MCF 10A (cell line): ENCODE measurements at regions of chr13 and their contacts with region 1.

Region 1: GRCh38 chr13:76980075-76980718 is 11.7 kb upstream of the CLN5 start:
- DNase-seq: peak; percentile 70
- H3K4me3 Mint-ChIP-seq: peak overlapping the region; percentile 52
- H3K27ac Mint-ChIP-seq: no peak overlapping the region
- H3K4me1 Mint-ChIP-seq: peaks cover 19% of the 10 kb centered on the region
- H3K27me3 Mint-ChIP-seq: peaks cover 20% of the 10 kb centered on the region
- CTCF ChIP-seq: peak; percentile 94

Region 2: DNA sequence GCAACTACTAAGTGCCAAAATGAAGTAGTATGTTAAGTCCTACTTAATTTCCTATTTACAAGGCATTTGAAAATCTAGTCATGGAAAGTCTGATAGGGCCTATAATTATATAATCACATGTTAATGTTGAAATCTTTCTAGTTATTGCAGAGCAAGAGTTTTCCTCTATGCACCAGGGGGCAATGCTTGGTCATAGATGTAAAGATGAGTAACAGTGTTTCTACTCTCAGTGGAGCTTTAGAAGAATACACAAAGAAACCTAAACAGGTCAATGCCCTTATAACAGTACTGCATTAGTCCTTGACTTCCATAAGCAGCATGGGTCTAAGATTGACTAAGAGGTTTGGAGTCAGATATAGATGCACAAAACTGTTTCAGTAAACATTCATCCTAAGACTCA is 312.6 kb before region 1 on chr13:
- CTCF ChIA-PET with region 1: interaction called, 22 read pairs
- POLR2A ChIA-PET with region 1: no interaction called
- intact Hi-C with region 1: no loop called
- DNase-seq: peak; percentile 59
- H3K4me3 Mint-ChIP-seq: no peak overlapping the region
- H3K27ac Mint-ChIP-seq: no peak overlapping the region
- H3K4me1 Mint-ChIP-seq: peaks cover 20% of the 10 kb centered on the region
- H3K27me3 Mint-ChIP-seq: no peaks in the 10 kb centered on the region
- CTCF ChIP-seq: peak; percentile 26

Region 3: DNA sequence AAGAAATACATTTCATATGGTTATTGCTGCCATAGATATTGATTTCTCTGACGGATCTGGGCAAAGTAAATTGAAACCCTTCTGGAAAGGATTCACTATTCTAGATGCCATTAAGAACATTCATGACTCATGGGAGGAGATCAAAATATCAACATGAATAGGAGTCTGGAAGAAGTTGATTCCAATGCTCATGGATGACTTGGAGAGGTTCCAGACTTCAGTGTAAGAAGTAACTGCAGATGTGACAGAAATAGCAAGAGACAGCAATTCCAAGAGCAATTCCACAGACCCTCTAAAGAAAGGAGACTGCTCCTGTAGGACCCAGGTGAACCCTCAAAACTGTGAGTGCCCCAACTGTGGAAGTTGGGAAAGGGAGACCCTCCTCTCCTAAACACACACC is 63.1 kb before region 1 on chr13:
- CTCF ChIA-PET with region 1: interaction called, 16 read pairs
- POLR2A ChIA-PET with region 1: interaction called, 13 read pairs
- intact Hi-C with region 1: no loop called
- DNase-seq: peak; percentile 46
- H3K4me3 Mint-ChIP-seq: no peak overlapping the region
- H3K27ac Mint-ChIP-seq: peak overlapping the region; percentile 91
- H3K4me1 Mint-ChIP-seq: peaks cover 19% of the 10 kb centered on the region
- H3K27me3 Mint-ChIP-seq: no peaks in the 10 kb centered on the region
- CTCF ChIP-seq: no peak

Region 4: DNA sequence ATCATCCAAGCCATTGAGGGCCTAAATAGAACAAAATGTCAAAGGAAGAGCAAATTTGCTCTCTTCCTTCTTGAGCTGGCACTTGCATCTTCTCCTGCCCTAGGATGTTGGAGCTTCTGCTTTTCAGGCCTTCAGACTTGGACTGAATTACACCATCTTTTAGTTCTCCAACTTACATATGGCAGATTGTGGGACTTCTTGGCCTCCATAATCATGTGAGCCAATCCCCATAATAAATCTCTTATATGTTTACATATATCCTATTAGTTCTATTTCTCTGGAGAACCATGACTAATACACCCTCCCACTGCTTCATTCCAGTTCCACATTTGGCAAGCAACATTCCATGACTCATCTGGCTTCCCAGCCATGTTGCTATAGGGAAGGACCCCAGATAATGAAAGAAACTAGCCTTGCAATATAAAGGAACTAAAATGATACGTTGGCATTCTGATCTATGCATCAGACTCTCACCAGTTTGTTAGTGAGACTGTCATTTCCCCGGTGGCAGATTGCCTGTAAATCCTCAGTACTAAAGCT is 42.8 kb before region 1 on chr13:
- CTCF ChIA-PET with region 1: interaction called, 16 read pairs
- POLR2A ChIA-PET with region 1: interaction called, 11 read pairs
- intact Hi-C with region 1: loop called (anchors 5 kb)
- DNase-seq: peak; percentile 98
- H3K4me3 Mint-ChIP-seq: no peak overlapping the region
- H3K27ac Mint-ChIP-seq: peak overlapping the region; percentile 78
- H3K4me1 Mint-ChIP-seq: peaks cover 38% of the 10 kb centered on the region
- H3K27me3 Mint-ChIP-seq: no peaks in the 10 kb centered on the region
- CTCF ChIP-seq: no peak

Region 5: DNA sequence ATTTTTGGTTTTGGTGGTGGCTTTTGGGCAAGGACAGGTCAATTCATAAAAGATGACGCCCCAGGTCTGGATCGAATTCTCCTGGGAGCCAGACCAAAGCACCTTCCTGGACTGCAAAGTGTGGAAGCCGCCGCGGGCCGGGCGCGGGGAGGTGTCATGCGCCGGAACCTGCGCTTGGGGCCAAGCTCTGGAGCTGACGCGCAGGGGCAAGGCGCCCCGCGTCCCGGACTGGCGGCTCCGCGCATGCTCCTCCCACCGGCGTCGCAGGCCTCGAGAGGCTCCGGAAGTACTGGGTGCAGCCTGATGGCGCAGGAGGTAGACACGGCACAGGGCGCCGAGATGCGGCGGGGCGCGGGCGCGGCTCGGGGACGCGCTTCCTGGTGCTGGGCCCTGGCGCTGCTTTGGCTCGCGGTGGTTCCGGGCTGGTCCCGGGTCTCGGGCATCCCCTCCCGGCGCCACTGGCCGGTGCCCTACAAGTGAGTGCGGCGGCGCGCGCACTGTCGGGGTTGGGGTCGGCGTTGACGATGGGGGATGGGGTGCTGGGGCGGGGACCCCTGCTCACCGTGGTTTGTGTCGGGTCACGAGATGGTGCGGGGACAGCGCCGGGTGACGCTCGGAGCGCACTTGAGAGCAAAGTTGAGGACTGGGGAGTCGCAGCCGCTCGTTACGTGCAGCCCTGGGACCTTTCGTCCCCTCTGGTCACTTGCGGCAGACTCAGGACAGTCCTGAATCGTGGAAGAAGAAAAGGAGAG is 11.8 kb after region 1 on chr13 and contains the start of gene CLN5:
- CTCF ChIA-PET with region 1: interaction called, 82 read pairs
- POLR2A ChIA-PET with region 1: interaction called, 41 read pairs
- intact Hi-C with region 1: no loop called
- DNase-seq: peak; percentile 92
- H3K4me3 Mint-ChIP-seq: peak within 1 kb of the TSS; percentile 93
- H3K27ac Mint-ChIP-seq: peak within 1 kb of the TSS; percentile 96
- H3K4me1 Mint-ChIP-seq: peaks cover 28% of the 10 kb centered on the region
- H3K27me3 Mint-ChIP-seq: peaks cover 3% of the 10 kb centered on the region
- CTCF ChIP-seq: no peak
- total RNA-seq, gene CLN5: 16.0 and 17.8 TPM in 2 replicates

Region 6: DNA sequence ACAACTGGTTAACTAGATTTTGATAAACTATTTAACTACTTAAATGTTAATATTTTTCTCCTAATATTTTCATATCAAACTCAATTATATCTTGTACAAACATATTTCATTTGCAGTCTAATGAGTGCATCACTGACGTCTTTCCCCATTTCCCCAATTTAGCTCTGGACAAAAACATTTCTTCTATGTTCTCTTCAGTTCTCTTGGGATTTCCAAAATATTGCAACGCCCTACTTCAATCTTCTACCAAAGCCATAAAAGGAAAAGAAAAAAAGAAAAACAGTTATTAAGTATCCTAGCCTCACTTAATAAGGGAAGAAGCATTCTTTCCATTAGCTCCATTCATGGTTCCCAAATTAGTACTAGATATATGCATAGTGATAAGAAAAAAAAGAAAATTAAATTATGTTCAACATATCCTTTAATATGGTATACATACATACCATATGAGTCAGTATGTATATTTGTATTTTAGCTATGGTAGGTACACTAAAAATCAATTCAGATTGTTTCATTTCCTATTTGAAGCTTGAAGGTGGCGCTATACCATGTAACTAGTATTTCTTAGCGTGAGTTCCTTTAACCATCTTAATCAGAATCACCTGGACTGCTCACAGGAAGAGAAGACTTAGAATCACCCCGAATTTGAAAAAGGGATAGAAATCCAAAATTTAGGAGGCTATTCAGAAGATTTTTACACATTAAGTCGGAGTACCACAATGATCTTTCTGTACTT is 36.9 kb after region 1 on chr13:
- CTCF ChIA-PET with region 1: no interaction called
- POLR2A ChIA-PET with region 1: no interaction called
- intact Hi-C with region 1: no loop called
- DNase-seq: no peak
- H3K4me3 Mint-ChIP-seq: no peak overlapping the region
- H3K27ac Mint-ChIP-seq: no peak overlapping the region
- H3K4me1 Mint-ChIP-seq: peaks cover 9% of the 10 kb centered on the region
- H3K27me3 Mint-ChIP-seq: no peaks in the 10 kb centered on the region
- CTCF ChIP-seq: no peak